Activated CD8-positive, alpha-beta T cell treated with anti-CD3 and anti-CD28 coated beads for 36 hours (primary cell): ENCODE measurements at regions of chr3 and their contacts with region 1.

Region 1: DNA sequence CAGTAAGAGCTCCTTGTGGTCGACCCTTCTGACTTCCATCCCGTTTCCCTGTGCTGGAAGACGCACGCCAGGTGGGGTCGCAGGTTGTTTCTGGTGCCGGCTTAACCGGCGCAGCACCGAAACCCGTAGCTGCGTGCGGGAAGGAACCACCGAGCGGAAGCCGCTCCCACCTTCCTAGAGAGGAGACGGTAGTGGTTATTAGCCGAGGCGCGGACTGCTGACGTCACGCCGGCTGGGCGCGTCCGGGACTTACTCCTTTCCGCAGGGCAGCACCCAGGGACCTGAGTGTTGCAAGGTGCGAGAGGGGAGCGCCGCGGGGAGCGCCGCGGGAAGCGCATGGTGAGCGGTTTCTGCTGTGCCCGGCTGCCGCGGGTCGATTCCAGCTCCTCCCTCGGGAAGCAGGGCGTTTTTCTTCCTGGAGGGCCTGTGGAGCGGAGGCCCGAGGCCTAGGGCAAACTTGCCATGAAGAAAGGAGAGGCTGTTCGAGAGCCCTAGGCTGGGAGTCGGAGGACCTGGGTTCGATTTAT is at the start of gene ZNF501:
- DNase-seq: peak; percentile 96
- ATAC-seq: peak; percentile 99
- H3K4me3 Mint-ChIP-seq: peak within 1 kb of the TSS; percentile 91
- H3K27ac Mint-ChIP-seq: peak within 1 kb of the TSS; percentile 85
- H3K4me1 Mint-ChIP-seq: peaks cover 16% of the 10 kb centered on the region
- H3K27me3 Mint-ChIP-seq: no peaks in the 10 kb centered on the region
- CTCF ChIP-seq: no peak
- total RNA-seq, gene ZNF501: 2.7 to 3.2 TPM

Region 2: DNA sequence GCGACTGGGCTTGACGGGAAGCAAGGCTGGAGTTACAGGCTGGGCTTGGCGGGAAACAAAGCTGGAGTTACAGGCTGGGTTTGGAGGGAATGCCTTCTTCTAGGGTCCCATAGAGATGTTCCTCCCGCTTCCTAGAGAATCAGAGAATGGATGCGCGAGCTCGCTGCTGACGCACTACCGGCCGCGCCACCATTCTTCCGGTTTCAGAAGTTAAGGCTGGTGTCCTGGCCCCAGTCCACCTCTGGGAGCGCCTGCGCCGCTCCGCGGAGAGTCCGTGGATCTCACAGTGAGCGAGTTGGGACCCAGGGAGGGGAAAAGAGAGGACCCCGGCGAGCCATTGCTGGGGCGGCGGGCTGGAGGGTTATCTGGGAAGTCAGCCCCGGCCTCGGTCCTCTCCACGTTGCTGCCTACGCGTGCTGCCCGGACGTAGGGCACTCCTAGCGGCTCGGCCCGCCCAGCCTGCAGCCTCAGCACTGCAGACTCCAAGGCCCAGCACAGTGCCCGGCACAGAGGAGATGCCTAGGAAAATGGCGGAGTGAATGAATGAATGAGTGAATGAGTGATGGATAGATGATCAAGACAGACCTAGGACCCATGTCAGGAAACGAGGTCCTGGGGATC is 16.9 kb before region 1 on chr3 and contains the start of gene ZNF502:
- CTCF ChIA-PET with region 1: interaction called, 9 read pairs
- POLR2A ChIA-PET with region 1: interaction called, 8 read pairs
- intact Hi-C with region 1: loop called (anchors 1 kb)
- DNase-seq: peak; percentile 84
- ATAC-seq: peak; percentile 95
- H3K4me3 Mint-ChIP-seq: peak within 1 kb of the TSS; percentile 92
- H3K27ac Mint-ChIP-seq: peak within 1 kb of the TSS; percentile 86
- H3K4me1 Mint-ChIP-seq: peaks cover 18% of the 10 kb centered on the region
- H3K27me3 Mint-ChIP-seq: peaks cover 16% of the 10 kb centered on the region
- CTCF ChIP-seq: peak; percentile 19
- total RNA-seq, gene ZNF502: 2.0 to 2.3 TPM